Activated naive CD4-positive, alpha-beta T cell treated with anti-CD3 and anti-CD28 coated beads, Interleukin-2, amount 10 ng/mL, durations not matched to agents 7 days and 5 days (primary cell): ENCODE measurements at regions of chr9 and their contacts with region 1.

Region 1: GRCh38 chr9:109469646-109470358 is 28.3 kb downstream of the PTPN3 start:
- DNase-seq: peak; percentile 77
- H3K4me3 Mint-ChIP-seq: no peak overlapping the region
- H3K27ac Mint-ChIP-seq: no peak overlapping the region
- H3K4me1 Mint-ChIP-seq: no peaks in the 10 kb centered on the region
- H3K27me3 Mint-ChIP-seq: peaks cover 17% of the 10 kb centered on the region

Region 2: DNA sequence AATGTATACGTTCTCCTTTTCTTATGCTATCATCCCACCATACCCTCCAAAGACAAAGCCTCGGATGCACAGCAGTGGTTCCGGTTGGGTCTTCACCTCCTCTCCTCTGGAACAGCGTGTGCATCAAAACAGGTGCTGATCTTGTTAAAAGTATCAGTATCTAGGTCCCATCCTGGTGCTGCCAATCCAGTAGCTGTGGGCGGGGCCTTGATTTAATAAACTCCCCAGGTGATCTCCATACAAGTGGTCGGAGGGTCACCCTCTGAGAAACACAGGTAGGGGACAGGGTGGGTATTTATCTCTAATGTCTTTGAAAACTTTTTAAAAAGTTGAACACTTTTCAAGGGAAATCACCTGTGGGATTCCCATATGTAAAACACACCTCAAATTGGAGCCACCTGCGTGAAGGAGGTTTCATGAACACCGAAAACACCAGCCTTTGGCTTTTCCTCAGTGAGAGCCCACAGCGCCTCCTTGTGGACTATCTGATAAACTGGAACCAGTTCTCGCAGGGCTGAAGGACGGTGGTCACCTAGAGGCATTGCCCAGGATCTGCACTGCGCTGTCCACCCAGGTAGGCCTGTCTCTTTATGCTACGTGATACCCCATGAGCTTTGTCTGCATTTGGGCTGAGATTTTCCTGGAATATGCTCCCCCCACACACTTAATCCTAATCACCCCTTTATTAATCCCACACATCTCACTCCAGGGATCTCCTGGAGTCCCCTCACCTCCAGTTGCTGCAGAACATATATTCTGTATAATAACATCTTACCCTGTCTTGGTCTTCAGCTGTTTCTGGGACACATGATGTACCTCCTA is 68.4 kb before region 1 on chr9:
- CTCF ChIA-PET with region 1: interaction called, 10 read pairs
- DNase-seq: peak; percentile 56
- H3K4me3 Mint-ChIP-seq: no peak overlapping the region
- H3K27ac Mint-ChIP-seq: no peak overlapping the region
- H3K4me1 Mint-ChIP-seq: no peaks in the 10 kb centered on the region
- H3K27me3 Mint-ChIP-seq: peaks cover 8% of the 10 kb centered on the region

Region 3: DNA sequence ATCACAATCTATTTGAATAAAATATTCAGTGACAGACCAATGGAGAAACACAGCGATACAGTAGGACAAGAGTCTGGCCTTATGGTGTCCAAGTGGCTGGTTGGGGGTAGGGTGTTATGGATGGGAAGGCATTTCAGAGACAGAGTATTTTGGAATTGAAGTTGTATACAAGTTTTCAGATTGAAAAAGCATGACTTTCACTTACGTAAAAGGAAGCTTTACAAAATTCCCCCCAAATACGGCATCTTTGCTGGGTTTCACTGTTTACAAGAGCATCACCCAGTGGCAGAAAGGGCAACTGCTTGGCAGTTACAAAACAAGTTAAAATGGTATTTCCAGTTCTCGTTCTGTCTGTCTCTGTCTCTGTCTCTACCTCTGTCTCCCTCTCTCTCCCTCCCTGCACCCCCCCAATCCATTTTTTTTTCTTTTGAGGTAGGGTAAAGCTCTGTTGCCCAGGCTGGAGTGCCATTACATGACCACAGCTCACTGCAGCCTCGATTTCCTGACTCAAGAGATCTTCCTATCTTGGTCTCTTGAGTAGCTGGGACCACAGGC is 57.9 kb before region 1 on chr9:
- CTCF ChIA-PET with region 1: interaction called, 19 read pairs
- DNase-seq: peak; percentile 30
- H3K4me3 Mint-ChIP-seq: no peak overlapping the region
- H3K27ac Mint-ChIP-seq: no peak overlapping the region
- H3K4me1 Mint-ChIP-seq: peaks cover 8% of the 10 kb centered on the region
- H3K27me3 Mint-ChIP-seq: peaks cover 31% of the 10 kb centered on the region

Region 4: GRCh38 chr9:109451311-109452025 is 18.3 kb before region 1 on chr9:
- CTCF ChIA-PET with region 1: interaction called, 60 read pairs
- DNase-seq: no peak
- H3K4me3 Mint-ChIP-seq: no peak overlapping the region
- H3K27ac Mint-ChIP-seq: no peak overlapping the region
- H3K4me1 Mint-ChIP-seq: peaks cover 11% of the 10 kb centered on the region
- H3K27me3 Mint-ChIP-seq: peaks cover 52% of the 10 kb centered on the region

Region 5: GRCh38 chr9:109459423-109459822 is 10.4 kb before region 1 on chr9:
- CTCF ChIA-PET with region 1: interaction called, 14 read pairs
- DNase-seq: no peak
- H3K4me3 Mint-ChIP-seq: no peak overlapping the region
- H3K27ac Mint-ChIP-seq: no peak overlapping the region
- H3K4me1 Mint-ChIP-seq: peaks cover 4% of the 10 kb centered on the region
- H3K27me3 Mint-ChIP-seq: peaks cover 36% of the 10 kb centered on the region